ENCODE measurements at regions of chr2 and their contacts with region 1.

Region 1: DNA sequence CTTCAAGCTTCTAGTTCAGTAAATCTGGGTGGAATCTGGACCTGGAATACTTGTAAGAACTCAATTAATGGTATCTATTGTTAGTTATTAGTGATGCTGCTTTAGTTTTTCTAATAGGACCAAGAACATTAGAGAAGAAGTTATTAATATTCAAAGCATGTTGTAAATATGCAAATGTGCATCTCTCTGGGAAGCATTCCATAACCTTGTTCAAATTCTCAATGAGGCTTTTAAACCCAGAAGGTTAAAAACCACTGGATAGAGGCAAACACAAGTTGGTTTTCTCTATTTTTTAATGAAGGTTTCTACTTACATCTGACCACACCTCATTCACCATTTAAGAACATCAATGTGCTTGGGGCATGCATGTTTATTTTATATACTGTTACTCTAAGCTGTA is 16.1 kb upstream of the ACVR1C start:
- DNase-seq: no peak
- ATAC-seq: no peak
- H3K4me3 ChIP-seq: no peak overlapping the region
- H3K27ac ChIP-seq: no peak overlapping the region
- H3K4me1 ChIP-seq: no peaks in the 10 kb centered on the region
- H3K27me3 ChIP-seq: no peaks in the 10 kb centered on the region
- CTCF ChIP-seq: no peak

Region 2: GRCh38 chr2:157377861-157378260 is 266.9 kb before region 1 on chr2:
- CTCF ChIA-PET with region 1: no interaction called
- POLR2A ChIA-PET with region 1: no interaction called
- intact Hi-C with region 1: no loop called
- DNase-seq: no peak
- ATAC-seq: no peak
- H3K4me3 ChIP-seq: no peak overlapping the region
- H3K27ac ChIP-seq: no peak overlapping the region
- H3K4me1 ChIP-seq: no peaks in the 10 kb centered on the region
- H3K27me3 ChIP-seq: no peaks in the 10 kb centered on the region
- CTCF ChIP-seq: no peak

Region 3: GRCh38 chr2:157692768-157693167 is 48.0 kb after region 1 on chr2:
- CTCF ChIA-PET with region 1: no interaction called
- POLR2A ChIA-PET with region 1: no interaction called
- intact Hi-C with region 1: loop called (anchors 5 kb)
- DNase-seq: peak; percentile 96
- ATAC-seq: peak; percentile 99
- H3K4me3 ChIP-seq: no peak overlapping the region
- H3K27ac ChIP-seq: peak overlapping the region; percentile 80
- H3K4me1 ChIP-seq: peaks cover 21% of the 10 kb centered on the region
- H3K27me3 ChIP-seq: no peaks in the 10 kb centered on the region
- CTCF ChIP-seq: no peak

Measured in PC-3 (cell line).